BJ (cell line): ENCODE measurements at regions of chr11 and their contacts with region 1.

Region 1: DNA sequence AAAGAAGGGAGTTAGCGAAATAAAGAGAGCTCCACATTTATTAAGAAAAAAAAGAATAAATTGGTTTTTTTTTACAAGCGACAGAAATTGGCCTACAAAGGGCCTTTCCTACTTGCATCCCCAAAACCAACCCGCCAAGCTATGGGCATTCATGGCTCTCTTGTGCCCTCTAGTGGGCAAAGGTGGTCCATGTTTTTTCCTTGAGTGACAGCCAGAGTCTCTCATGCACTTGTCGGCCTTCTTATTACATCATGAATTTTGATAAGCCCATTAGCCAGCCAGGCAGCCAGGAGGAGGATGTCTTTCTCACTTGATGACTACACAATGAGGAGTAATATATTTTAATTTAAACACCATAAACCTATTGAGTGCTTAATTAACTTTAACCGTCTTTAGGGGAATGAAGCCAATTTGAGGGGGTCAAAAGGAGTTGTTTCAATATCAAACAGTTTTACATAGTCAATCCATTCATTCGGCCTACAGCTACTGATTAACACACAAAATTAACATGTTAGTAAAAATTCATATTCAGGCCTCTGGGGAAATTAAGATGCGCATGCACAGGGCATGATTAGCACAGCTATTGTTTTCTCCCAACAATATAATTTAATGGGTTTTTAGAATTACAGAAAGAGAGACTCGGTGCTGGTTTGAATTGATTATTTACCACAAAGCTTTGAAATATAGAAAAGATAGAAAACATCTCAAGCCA is 85.5 kb downstream of the RCN1 start:
- DNase-seq: peak; percentile 10
- H3K4me3 ChIP-seq: no peak overlapping the region
- H3K27me3 ChIP-seq: peaks cover 2% of the 10 kb centered on the region
- CTCF ChIP-seq: peak; percentile 82

Region 2: GRCh38 chr11:31340903-31341572 is 835.3 kb before region 1 on chr11:
- CTCF ChIA-PET with region 1: interaction called, 17 read pairs
- POLR2A ChIA-PET with region 1: no interaction called
- DNase-seq: no peak
- H3K4me3 ChIP-seq: no peak overlapping the region
- H3K27me3 ChIP-seq: no peaks in the 10 kb centered on the region
- CTCF ChIP-seq: peak; percentile 69

Region 3: DNA sequence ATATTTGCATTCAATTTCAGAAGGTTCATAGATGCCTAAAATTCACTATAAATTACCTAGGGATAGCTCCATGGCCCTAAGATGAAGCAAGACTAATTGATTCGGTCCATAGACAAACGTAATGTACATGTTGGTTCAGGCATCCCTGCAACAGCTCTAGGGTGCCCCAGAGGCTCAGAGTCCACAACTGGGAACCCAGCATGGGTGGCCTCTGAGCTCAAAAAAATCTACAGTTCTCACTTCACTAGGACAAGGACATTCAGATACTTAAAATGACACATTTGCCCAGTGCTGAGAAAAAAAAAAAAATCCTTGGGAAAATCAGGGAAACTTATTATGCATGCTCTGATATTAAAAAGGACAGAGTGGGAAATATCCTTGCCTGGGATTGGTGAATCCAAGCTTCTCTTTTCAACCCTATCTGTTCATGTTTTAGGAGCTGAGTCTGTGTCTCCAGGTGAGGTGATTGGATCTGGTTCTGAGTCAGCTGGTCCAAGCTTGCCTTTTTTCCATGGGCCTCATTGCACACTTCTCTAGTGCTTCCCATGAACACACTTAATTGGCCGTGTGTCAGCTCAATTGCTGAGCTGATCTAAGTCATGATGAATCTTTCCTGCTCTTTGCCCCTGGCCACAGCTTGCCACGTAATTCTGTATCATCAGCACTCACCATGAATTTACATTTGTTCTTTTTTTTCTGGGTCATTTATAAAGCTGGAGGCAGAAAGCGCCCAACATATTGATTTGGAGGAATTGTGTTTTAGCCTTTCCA is 201.8 kb before region 1 on chr11:
- CTCF ChIA-PET with region 1: interaction called, 10 read pairs
- POLR2A ChIA-PET with region 1: no interaction called
- DNase-seq: peak; percentile 21
- H3K4me3 ChIP-seq: no peak overlapping the region
- H3K27me3 ChIP-seq: peaks cover 2% of the 10 kb centered on the region; the same call in 1 of the 2 replicates
- CTCF ChIP-seq: no peak

Region 4: GRCh38 chr11:32029721-32030120 is 146.7 kb before region 1 on chr11:
- CTCF ChIA-PET with region 1: interaction called, 5 read pairs
- POLR2A ChIA-PET with region 1: interaction called, 25 read pairs
- DNase-seq: no peak
- H3K4me3 ChIP-seq: no peak overlapping the region
- H3K27me3 ChIP-seq: no peaks in the 10 kb centered on the region; the same call in none of the 2 replicates
- CTCF ChIP-seq: no peak

Region 5: GRCh38 chr11:32044158-32044863 is 132.1 kb before region 1 on chr11:
- CTCF ChIA-PET with region 1: interaction called, 289 read pairs
- POLR2A ChIA-PET with region 1: no interaction called
- DNase-seq: no peak
- H3K4me3 ChIP-seq: no peak overlapping the region
- H3K27me3 ChIP-seq: peaks cover 4% of the 10 kb centered on the region
- CTCF ChIP-seq: no peak

Region 6: DNA sequence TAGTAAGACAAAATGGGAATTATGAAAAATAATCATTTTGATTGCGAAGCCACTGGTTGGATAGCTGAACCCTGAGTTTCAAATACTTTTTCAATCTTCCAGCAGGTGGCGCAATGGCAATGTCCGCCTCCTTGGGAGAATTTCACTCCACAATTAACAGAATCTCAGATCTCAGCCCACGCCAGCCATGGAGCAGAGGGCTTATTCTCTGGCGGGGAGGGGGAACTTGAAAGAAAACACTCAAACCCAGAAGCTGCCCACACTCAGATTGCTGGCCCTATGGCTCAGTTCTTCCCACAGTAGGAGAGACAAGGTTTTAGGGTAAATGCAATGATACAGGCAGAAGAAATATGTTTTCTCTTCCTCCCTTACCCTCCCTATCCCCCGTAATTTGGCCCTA is 124.2 kb before region 1 on chr11:
- CTCF ChIA-PET with region 1: interaction called, 289 read pairs
- POLR2A ChIA-PET with region 1: no interaction called
- DNase-seq: no peak
- H3K4me3 ChIP-seq: no peak overlapping the region
- H3K27me3 ChIP-seq: peaks cover 8% of the 10 kb centered on the region
- CTCF ChIP-seq: peak; percentile 67

Region 7: GRCh38 chr11:32162351-32162750 is 14.0 kb before region 1 on chr11:
- CTCF ChIA-PET with region 1: interaction called, 17 read pairs
- POLR2A ChIA-PET with region 1: no interaction called
- DNase-seq: no peak
- H3K4me3 ChIP-seq: no peak overlapping the region
- H3K27me3 ChIP-seq: peaks cover 8% of the 10 kb centered on the region
- CTCF ChIP-seq: no peak

Region 8: GRCh38 chr11:32487270-32487669 is 310.9 kb after region 1 on chr11:
- CTCF ChIA-PET with region 1: no interaction called
- POLR2A ChIA-PET with region 1: no interaction called
- DNase-seq: no peak
- H3K4me3 ChIP-seq: no peak overlapping the region
- H3K27me3 ChIP-seq: no peaks in the 10 kb centered on the region
- CTCF ChIP-seq: 0 out of 2 replicates have a peak, but pooled peaks have one; percentile 17